ENCODE measurements at regions of chrX and their contacts with region 1.

Region 1: DNA sequence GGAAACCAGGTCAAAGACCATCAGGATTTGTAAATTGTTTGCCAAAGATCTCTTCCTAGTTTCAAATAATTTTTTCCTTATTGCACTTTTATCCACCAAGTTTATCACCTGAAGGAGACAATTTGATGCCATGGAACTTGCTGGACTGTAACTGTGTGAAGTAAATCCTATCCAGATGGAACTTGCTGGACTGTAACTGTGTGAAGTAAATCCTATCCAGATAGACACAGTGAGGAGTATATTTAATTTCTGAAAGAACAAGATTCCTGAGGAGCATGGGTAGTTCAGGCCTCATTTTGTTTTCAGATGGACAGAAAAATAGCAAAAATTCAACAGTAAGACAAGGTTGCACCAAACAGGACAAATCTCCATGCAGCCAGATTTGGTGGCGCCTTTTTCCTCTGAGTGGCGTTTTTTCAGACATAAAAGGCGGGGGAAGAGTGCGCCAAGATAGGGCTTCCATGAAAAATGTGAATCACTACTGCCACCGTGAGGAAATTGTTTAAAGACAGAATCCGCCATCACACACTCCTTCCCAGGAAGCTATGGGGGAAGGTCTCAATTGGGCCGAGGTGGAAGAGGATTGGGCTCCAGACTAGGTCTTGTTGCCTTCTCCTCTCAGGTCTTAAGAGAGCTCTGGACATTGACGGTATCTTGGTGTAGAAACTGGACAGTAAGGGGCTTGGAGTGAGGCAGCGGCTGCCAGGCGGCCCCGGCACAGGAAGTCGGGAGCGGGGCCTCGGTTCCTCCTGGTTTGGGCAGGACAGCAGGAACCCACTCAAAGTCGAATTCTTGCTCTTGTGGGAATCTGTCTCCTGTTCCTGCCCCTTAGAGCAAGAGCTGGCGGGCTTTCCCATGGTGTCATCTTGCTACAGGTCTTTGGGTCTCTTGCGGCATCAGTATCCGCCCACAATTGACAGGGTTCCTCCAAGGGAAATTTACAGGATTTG is 234.7 kb downstream of the OR13H1 start:
- DNase-seq: peak in 4 of 5 donors; percentile 80 to 83 (median 82)
- H3K4me3 ChIP-seq: no peak overlapping the region
- H3K4me3 Mint-ChIP-seq: peak overlapping the region in 6 of 8 donors; percentile 91 to 96 (median 94)
- H3K27ac ChIP-seq: no peak overlapping the region
- H3K27ac Mint-ChIP-seq: peak overlapping the region in 6 of 7 donors; percentile 53 to 93 (median 90)
- H3K4me1 ChIP-seq: no peaks in the 10 kb centered on the region
- H3K4me1 Mint-ChIP-seq: peaks cover 0 to 18% (median 3%) of the 10 kb centered on the region in 4 donors
- H3K27me3 ChIP-seq: no peaks in the 10 kb centered on the region
- H3K27me3 Mint-ChIP-seq: no peaks in the 10 kb centered on the region

Region 2: GRCh38 chrX:131216828-131217227 is 561.7 kb before region 1 on chrX:
- CTCF ChIA-PET with region 1: no interaction called
- POLR2A ChIA-PET with region 1: no interaction called
- intact Hi-C with region 1: no loop called
- DNase-seq: no peak
- H3K4me3 ChIP-seq: no peak overlapping the region
- H3K4me3 Mint-ChIP-seq: no peak overlapping the region
- H3K27ac ChIP-seq: no peak overlapping the region
- H3K27ac Mint-ChIP-seq: no peak overlapping the region
- H3K4me1 ChIP-seq: no peaks in the 10 kb centered on the region
- H3K4me1 Mint-ChIP-seq: no peaks in the 10 kb centered on the region
- H3K27me3 ChIP-seq: no peaks in the 10 kb centered on the region
- H3K27me3 Mint-ChIP-seq: peaks cover 0 to 2% of the 10 kb centered on the region in 2 donors

Region 3: DNA sequence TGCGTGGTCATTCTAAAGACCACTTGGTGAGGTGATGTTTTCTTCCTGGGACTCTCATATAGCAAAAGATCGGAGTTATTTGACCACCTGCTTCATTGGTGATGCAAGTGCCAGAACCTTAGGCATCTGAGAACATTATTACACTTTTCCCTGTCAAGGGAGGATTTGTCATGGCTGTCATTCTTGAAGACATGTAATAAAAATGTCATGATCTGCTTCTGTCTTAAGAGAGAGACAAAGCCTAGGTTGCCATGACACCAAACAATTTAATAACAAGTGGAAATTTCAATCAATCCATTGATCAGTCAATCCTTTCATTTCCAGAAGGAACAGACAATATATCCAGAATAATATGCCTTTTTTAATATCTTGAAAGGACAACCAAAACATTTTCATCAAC is 332.6 kb before region 1 on chrX:
- CTCF ChIA-PET with region 1: no interaction called
- POLR2A ChIA-PET with region 1: no interaction called
- intact Hi-C with region 1: no loop called
- DNase-seq: no peak
- H3K4me3 ChIP-seq: no peak overlapping the region
- H3K4me3 Mint-ChIP-seq: no peak overlapping the region
- H3K27ac ChIP-seq: no peak overlapping the region
- H3K27ac Mint-ChIP-seq: no peak overlapping the region
- H3K4me1 ChIP-seq: no peaks in the 10 kb centered on the region
- H3K4me1 Mint-ChIP-seq: no peaks in the 10 kb centered on the region
- H3K27me3 ChIP-seq: no peaks in the 10 kb centered on the region
- H3K27me3 Mint-ChIP-seq: no peaks in the 10 kb centered on the region

Region 4: GRCh38 chrX:131763674-131764073 is 14.9 kb before region 1 on chrX:
- CTCF ChIA-PET with region 1: no interaction called
- POLR2A ChIA-PET with region 1: no interaction called
- intact Hi-C with region 1: loop called (anchors 1 kb)
- DNase-seq: peak in 4 of 5 donors; percentile 86 to 88 (median 88)
- H3K4me3 ChIP-seq: no peak overlapping the region
- H3K4me3 Mint-ChIP-seq: peak overlapping the region in 6 of 8 donors; percentile 90 to 94 (median 91)
- H3K27ac ChIP-seq: no peak overlapping the region
- H3K27ac Mint-ChIP-seq: peak overlapping the region in 5 of 7 donors; percentile 84 to 96 (median 87)
- H3K4me1 ChIP-seq: no peaks in the 10 kb centered on the region
- H3K4me1 Mint-ChIP-seq: peaks cover 0 to 12% (median 3%) of the 10 kb centered on the region in 4 donors
- H3K27me3 ChIP-seq: no peaks in the 10 kb centered on the region
- H3K27me3 Mint-ChIP-seq: no peaks in the 10 kb centered on the region

Measured in CD4-positive, alpha-beta memory T cell (primary cell).